Activated naive CD4-positive, alpha-beta T cell treated with anti-CD3 and anti-CD28 coated beads, Interleukin-2, amount 10 ng/mL, durations not matched to agents 7 days and 5 days (primary cell): ENCODE measurements at regions of chr10 and their contacts with region 1.

Region 1: DNA sequence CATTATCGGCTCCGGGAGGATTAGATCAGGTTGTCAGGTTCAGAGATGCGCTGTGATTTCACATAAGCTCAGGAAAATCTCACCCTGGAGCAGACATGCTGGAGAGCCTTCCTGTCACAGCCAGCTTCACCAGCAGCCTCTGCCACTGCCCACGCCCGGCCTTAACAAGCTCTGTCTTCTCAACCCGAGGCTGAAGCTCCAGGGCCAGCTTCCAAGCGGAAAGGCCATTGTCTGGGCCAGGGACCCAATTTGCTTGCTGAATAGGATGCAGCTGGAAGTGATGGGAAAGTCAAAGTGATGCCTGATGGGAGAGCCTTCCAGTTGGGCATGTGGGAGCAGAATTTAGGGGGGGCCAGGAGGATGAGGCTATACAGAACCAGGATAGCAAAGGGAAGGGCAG is 36.3 kb downstream of the C10orf105 start:
- DNase-seq: no peak
- H3K4me3 Mint-ChIP-seq: no peak overlapping the region
- H3K27ac Mint-ChIP-seq: no peak overlapping the region
- H3K4me1 Mint-ChIP-seq: peaks cover 3% of the 10 kb centered on the region
- H3K27me3 Mint-ChIP-seq: peaks cover 53% of the 10 kb centered on the region

Region 2: GRCh38 chr10:71696628-71697326 is 13.5 kb after region 1 on chr10:
- CTCF ChIA-PET with region 1: interaction called, 10 read pairs
- DNase-seq: peak; percentile 75
- H3K4me3 Mint-ChIP-seq: no peak overlapping the region
- H3K27ac Mint-ChIP-seq: no peak overlapping the region
- H3K4me1 Mint-ChIP-seq: peaks cover 56% of the 10 kb centered on the region
- H3K27me3 Mint-ChIP-seq: peaks cover 27% of the 10 kb centered on the region